Cardiac septum (tissue), 1 donor: ENCODE measurements at regions of chr14 and their contacts with region 1.

Region 1: DNA sequence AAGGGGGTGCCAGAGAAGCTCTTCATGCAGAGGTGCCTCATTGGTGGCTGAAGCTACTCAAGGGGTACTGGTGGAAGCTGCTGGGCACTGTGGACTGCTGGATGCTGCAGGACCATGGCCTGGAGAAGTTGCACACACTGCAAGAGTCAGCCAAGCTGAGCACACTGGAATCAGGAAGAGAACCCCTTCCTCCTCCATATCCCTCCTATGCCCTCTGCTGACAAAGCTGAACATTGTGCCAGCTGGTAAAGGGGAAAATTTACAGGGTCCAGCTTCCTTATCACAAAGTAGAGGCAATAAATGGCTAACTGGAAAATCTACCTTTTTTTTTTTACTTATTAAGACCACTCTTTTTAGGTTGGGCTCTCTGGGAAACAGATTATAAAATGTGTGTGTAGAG is 6.5 kb downstream of the CCDC175 start:
- DNase-seq: no peak

Region 2: DNA sequence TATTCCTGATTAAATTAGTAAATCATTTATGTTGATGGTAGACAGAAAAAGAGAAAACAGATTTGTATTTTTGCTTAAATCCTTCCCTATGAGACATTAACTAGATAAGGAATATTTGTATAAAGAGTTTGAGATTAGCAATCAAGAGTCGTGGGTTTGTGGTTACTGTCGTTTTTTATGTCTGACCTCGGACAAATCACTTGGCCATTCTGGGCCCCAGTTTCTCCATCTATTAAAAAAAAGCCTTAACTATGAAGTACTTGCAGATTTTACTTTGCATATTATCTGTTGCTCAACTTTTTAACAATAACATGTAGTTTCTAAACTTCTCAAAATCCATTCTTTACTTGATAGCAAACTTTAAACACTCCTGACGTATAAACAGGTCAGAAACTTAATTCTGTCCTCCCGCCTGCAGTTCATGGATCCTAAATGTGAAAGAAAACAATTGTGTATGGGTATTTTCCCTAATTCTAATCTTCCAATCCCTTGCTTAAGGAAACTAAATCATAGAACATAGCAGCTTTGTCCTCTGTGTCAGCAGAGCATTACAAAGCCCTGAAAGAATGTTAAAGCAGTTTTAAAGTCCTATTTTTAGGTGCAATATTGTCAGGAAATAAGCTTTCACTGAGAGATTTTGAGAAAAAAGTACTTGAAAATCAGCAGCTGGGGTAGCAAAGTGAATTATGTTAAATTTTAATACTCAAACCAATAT is 223.2 kb before region 1 on chr14:
- intact Hi-C with region 1: no loop called
- DNase-seq: no peak

Region 3: DNA sequence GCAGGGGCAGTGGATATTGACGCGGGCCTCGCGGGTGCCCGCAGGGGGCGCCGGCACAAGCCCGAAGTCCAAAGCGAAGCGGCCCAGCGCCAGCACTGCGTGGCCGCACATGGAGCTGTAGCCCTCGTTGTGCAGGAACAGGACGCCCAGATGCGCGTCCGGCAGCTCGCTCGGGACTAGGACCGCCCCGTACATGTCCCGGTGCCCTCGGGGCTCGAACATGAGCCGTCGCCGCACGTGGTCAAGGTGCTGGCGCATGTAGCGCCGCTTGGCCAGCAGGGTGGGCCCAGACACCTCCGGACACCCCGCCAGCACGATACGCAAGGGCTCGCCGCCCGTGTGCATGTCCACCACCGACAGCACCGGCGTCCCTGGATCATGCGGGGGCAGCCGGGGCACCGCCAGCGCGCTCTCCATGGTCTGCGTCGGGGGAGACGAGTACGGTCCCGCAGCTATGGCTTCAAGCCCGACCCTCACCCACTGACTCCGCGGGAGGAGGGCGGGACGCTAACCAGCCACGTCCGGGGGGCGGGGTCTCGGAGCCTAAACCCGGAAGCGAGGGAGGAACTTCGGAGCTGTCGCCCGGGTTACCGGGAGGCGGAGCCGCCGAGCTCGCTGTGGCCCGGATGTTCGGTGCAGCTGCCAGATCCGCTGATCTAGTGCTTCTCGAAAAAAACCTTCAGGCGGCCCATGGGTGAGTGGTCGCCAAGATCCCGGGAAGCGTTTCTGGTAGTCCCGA is 86.0 kb before region 1 on chr14 and contains the starts of genes JKAMP and L3HYPDH:
- intact Hi-C with region 1: no loop called
- DNase-seq: peak; percentile 100
- total RNA-seq, gene JKAMP: 21.1 TPM
- total RNA-seq, gene L3HYPDH: 20.3 TPM

Region 4: DNA sequence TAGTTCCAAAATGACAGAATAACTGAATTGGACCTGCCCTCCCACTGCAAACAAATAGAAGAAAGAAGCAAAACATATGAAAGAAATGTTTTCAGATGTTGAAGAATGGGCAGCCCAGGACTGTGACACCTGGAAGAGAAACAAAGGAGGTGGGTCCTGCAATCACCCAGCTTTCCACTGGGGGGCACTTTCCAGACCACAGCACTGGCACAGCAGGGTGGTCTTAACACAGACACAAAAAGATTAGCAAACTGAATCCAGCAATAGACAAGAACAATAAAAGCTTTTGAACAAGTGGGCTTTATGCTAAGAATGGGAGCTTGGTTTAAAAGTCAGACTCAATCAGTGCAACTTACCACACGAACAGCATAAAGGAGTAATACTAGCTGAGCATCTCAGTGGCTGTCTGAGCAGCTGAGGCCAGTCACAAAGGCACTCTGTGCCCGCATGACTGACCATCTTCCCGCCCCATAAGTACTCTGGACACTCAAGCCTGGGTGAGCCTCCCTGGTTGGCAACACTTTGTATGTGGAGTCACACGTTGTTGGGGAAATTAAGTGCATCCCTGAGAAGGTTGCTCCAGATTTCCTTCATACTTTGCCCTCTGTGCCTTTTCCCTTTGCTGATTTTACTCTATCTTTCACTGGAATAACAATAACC is 58.1 kb before region 1 on chr14:
- intact Hi-C with region 1: loop called (anchors 2 kb)
- DNase-seq: no peak

Region 5: GRCh38 chr14:60035177-60035576 is 465.1 kb after region 1 on chr14:
- intact Hi-C with region 1: no loop called
- DNase-seq: no peak